T-cell (primary cell): ENCODE measurements at regions of chr17 and their contacts with region 1.

Region 1: GRCh38 chr17:76397687-76398487 is 13.5 kb downstream of the SPHK1 start:
- DNase-seq: peak; percentile 53 to 88 (median 77)
- ATAC-seq: peak; percentile 79 to 84 (median 80)
- H3K4me3 ChIP-seq: no peak overlapping the region
- H3K4me3 Mint-ChIP-seq: no peak overlapping the region
- H3K27ac ChIP-seq: no peak overlapping the region
- H3K27ac Mint-ChIP-seq: no peak overlapping the region
- H3K4me1 ChIP-seq: peaks cover 0 to 2% of the 10 kb centered on the region in 2 experiments
- H3K4me1 Mint-ChIP-seq: no peaks in the 10 kb centered on the region
- H3K27me3 ChIP-seq: no peaks in the 10 kb centered on the region
- H3K27me3 Mint-ChIP-seq: no peaks in the 10 kb centered on the region

Region 2: GRCh38 chr17:75917141-75917916 is 480.6 kb before region 1 on chr17:
- CTCF ChIA-PET with region 1: no interaction called
- POLR2A ChIA-PET with region 1: no interaction called
- DNase-seq: no peak
- ATAC-seq: peak in 1 of 4 experiments; percentile 16
- H3K4me3 ChIP-seq: no peak overlapping the region
- H3K4me3 Mint-ChIP-seq: no peak overlapping the region
- H3K27ac ChIP-seq: no peak overlapping the region
- H3K27ac Mint-ChIP-seq: peak overlapping the region in 1 of 2 donors; percentile 45
- H3K4me1 ChIP-seq: peaks cover 0 to 7% of the 10 kb centered on the region in 2 experiments
- H3K4me1 Mint-ChIP-seq: peaks cover 0 to 4% (median 3%) of the 10 kb centered on the region in 3 donors
- H3K27me3 ChIP-seq: no peaks in the 10 kb centered on the region
- H3K27me3 Mint-ChIP-seq: no peaks in the 10 kb centered on the region

Region 3: GRCh38 chr17:76307299-76307965 is 90.5 kb before region 1 on chr17:
- CTCF ChIA-PET with region 1: interaction called, 15 to 29 read pairs
- POLR2A ChIA-PET with region 1: no interaction called
- DNase-seq: no peak
- ATAC-seq: no peak
- H3K4me3 ChIP-seq: no peak overlapping the region
- H3K4me3 Mint-ChIP-seq: no peak overlapping the region
- H3K27ac ChIP-seq: no peak overlapping the region
- H3K27ac Mint-ChIP-seq: no peak overlapping the region
- H3K4me1 ChIP-seq: no peaks in the 10 kb centered on the region
- H3K4me1 Mint-ChIP-seq: peaks cover 0 to 1% (median 0%) of the 10 kb centered on the region in 3 donors
- H3K27me3 ChIP-seq: no peaks in the 10 kb centered on the region
- H3K27me3 Mint-ChIP-seq: no peaks in the 10 kb centered on the region

Region 4: GRCh38 chr17:76384222-76384986 is 13.5 kb before region 1 on chr17 and contains the start of gene SPHK1:
- CTCF ChIA-PET with region 1: interaction called in 1 of 2 experiments, 11 read pairs
- POLR2A ChIA-PET with region 1: no interaction called
- DNase-seq: peak in 19 of 35 experiments; percentile 15 to 74 (median 39)
- ATAC-seq: peak; percentile 56 to 73 (median 69)
- H3K4me3 ChIP-seq: peak within 1 kb of the TSS; percentile 58 to 84
- H3K4me3 Mint-ChIP-seq: peak within 1 kb of the TSS; percentile 82 to 94 (median 89)
- H3K27ac ChIP-seq: no peak within 1 kb of the TSS
- H3K27ac Mint-ChIP-seq: peak within 1 kb of the TSS; percentile 28 to 36
- H3K4me1 ChIP-seq: peaks cover 10 to 32% of the 10 kb centered on the region in 2 experiments
- H3K4me1 Mint-ChIP-seq: peaks cover 4 to 13% (median 10%) of the 10 kb centered on the region in 3 donors
- H3K27me3 ChIP-seq: peaks cover 0 to 33% of the 10 kb centered on the region in 2 experiments
- H3K27me3 Mint-ChIP-seq: peaks cover 0 to 1% of the 10 kb centered on the region in 2 donors
- total RNA-seq, gene SPHK1: 0.70 to 1.6 (median 1.3) TPM